ENCODE measurements at regions of chr7 and their contacts with region 1.

Region 1: DNA sequence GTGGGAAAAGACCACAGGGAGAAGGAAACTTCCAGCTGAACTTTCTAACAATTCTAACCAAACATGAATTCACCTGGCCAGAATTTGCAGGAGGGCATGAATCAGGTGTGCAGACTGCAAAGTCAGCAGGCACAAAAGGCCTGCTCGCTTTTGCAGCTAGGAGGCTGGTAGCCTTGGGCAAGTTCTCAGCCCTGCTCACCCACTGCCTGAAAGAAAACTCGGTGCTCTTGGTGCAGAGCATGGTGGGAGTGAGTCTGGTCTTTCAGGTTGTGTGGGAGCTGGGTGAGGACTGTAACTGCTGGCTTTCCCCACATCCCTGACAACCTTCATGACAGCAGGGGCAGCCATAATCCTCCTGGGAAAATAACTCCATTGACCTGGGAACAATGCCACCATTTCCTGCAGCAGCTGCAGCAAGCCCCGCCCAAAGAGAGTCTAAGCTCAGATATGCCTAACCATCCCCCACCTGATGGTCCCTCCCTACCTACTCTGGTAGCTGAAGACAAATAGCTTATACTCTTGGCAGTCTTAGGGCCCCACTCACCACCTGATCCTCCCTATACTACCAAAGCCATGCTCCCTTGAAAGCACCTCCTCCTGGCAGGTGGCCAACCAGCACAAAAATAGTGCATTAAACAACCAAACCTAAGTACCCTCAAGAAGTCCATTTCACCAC is 31.6 kb downstream of the ZNF117 start:
- DNase-seq: no peak
- ATAC-seq: no peak
- H3K4me3 ChIP-seq: no peak overlapping the region
- H3K27ac ChIP-seq: no peak overlapping the region
- H3K4me1 ChIP-seq: no peaks in the 10 kb centered on the region
- H3K27me3 ChIP-seq: no peaks in the 10 kb centered on the region
- CTCF ChIP-seq: no peak
- POLR2A ChIP-seq: no peak

Region 2: DNA sequence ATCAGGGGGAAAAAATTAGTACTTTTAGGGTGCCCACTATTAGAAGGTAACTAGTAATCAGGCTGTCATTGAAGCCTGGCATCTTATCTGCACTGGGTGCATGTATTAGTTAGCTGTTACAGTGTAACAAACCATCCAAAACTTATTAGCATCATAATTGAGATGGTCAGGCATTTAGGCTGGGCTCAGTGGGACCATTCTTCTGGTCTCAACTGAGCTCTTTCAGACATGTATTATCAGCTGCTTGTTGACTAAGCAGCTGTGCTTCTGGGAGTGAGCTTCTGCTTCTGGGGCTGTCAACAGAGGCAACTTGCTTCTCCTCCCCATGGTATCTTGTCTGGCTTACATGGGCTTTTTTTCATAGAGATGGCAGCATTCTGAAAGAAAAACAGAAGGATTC is 260.4 kb after region 1 on chr7:
- intact Hi-C with region 1: loop called (anchors 5 kb)
- DNase-seq: no peak
- ATAC-seq: no peak
- H3K4me3 ChIP-seq: no peak overlapping the region
- H3K27ac ChIP-seq: no peak overlapping the region
- H3K4me1 ChIP-seq: no peaks in the 10 kb centered on the region
- H3K27me3 ChIP-seq: no peaks in the 10 kb centered on the region
- CTCF ChIP-seq: no peak
- POLR2A ChIP-seq: no peak